Endothelial cell of umbilical vein (primary cell): ENCODE measurements at regions of chr3 and their contacts with region 1.

Region 1: DNA sequence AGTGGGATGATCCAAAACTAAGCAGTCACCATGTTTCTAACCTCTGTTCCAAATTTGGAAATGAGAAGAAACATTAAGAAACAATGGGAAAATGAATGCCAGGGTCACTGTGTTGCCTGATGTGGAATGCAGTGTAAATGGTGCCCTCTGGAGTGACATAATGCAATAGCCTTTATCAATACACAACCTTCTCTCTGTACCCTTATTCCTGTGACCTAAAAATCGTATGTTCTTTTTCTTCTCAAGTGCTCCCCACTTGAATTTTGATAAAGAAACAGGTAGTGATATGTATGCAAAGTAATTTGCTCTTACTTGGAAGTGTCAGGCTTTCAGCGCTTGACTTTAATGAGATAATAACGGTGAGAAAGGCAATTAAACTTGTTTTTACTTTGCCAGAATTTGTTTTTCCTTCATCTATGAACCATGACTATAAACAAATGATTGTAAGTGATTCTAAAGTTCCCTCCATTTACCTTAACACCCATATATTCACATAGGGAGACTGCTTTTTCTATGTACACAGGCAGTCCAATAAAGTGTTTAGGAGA is 145.8 kb upstream of the THRB start:
- DNase-seq: peak; percentile 63
- H3K4me3 ChIP-seq: no peak overlapping the region
- H3K27ac ChIP-seq: no peak overlapping the region
- H3K4me1 ChIP-seq: peaks cover 9% of the 10 kb centered on the region
- H3K27me3 ChIP-seq: no peaks in the 10 kb centered on the region
- CTCF ChIP-seq: peak; percentile 34 to 58
- POLR2A ChIP-seq: no peak

Region 2: DNA sequence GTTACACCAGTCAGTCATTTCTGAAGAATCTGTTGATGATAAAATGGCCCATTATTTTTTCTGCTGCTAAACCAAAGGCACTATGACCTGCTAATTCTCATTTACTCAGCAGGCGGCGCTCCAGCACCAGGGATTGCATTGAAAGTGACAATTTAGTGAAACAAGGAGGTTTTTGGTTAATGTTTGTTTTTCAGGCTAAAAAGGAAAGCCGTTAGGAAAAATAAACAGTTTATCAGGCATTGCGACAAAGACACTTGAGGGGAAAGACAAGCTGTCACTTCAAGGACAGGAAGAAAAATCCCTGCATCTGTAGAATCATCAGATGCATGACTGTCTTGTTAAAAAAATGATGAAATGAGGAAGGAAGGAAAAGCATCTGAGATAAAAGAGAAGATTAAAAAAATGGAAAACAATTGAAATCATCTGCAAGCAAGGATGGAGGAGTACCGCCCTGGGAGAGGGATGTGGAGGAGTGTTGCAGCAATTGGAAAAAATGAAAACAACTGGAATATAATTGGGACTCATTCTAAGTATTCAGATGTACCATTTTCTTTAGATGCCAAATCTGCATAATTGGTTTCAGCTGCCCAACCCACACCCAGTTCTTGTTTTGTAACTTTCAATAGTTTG is 641.3 kb before region 1 on chr3:
- CTCF ChIA-PET with region 1: no interaction called
- POLR2A ChIA-PET with region 1: no interaction called
- dilution Hi-C with region 1: no loop called
- intact Hi-C with region 1: loop called (anchors 2 kb)
- DNase-seq: peak; percentile 79
- H3K4me3 ChIP-seq: no peak overlapping the region
- H3K27ac ChIP-seq: no peak overlapping the region
- H3K4me1 ChIP-seq: peaks cover 3% of the 10 kb centered on the region
- H3K27me3 ChIP-seq: peaks cover 4 to 8% of the 10 kb centered on the region in 2 experiments
- CTCF ChIP-seq: peak; percentile 67 to 87
- POLR2A ChIP-seq: no peak

Region 3: DNA sequence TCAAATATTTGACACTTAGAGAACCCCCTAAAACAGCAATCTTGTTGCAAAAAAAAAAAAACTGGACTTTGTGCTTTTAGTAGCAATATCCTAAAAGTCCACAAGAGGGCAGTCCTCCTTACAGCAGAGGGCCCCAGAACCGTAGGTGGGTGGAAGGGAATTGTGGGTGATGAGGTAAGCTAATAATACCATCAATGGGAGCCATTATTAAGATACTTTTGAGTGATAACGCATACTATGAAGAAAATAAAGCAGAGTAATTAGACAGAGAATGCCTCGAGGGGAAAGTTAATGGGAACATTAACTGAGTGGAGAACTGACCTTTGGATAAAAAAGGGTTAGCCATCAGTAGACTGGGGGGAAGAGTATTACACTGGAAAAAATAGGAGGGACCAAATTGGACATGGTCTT is 375.7 kb before region 1 on chr3:
- CTCF ChIA-PET with region 1: interaction called, 17 read pairs
- POLR2A ChIA-PET with region 1: no interaction called
- dilution Hi-C with region 1: no loop called
- intact Hi-C with region 1: loop called (anchors 1 kb)
- DNase-seq: peak; percentile 58
- H3K4me3 ChIP-seq: no peak overlapping the region
- H3K27ac ChIP-seq: no peak overlapping the region
- H3K4me1 ChIP-seq: no peaks in the 10 kb centered on the region
- H3K27me3 ChIP-seq: no peaks in the 10 kb centered on the region
- CTCF ChIP-seq: peak; percentile 57 to 62
- POLR2A ChIP-seq: no peak

Region 4: GRCh38 chr3:24521420-24522145 is 118.8 kb before region 1 on chr3:
- CTCF ChIA-PET with region 1: interaction called, 3 read pairs
- POLR2A ChIA-PET with region 1: no interaction called
- dilution Hi-C with region 1: no loop called
- intact Hi-C with region 1: loop called (anchors 2 kb)
- DNase-seq: peak; percentile 37
- H3K4me3 ChIP-seq: peak overlapping the region; percentile 43 to 57 (median 56)
- H3K27ac ChIP-seq: no peak overlapping the region
- H3K4me1 ChIP-seq: peaks cover 9% of the 10 kb centered on the region
- H3K27me3 ChIP-seq: peaks cover 6 to 21% of the 10 kb centered on the region in 2 experiments
- CTCF ChIP-seq: no peak
- POLR2A ChIP-seq: no peak